CD8-positive, alpha-beta T cell (primary cell): ENCODE measurements at regions of chr12 and their contacts with region 1.

Region 1: DNA sequence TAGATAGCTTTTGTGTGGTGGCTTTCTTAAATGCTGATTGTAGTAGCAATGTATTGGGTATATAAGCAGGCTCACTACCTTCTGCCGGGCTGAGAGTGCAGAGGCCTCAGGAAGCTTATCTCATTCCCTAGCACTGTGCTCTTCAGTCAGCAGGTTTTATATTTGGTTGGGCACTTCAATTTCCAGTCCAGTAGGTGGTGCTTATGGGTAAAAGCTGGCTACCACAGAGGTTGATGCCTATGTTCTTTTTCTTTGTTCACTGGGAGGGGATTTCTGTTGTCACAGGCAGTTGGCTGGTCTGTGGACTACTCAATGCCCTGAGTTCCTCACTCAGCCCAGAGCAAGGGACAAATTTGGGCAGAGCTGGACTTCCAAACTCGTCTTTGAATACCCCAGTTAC is 43.0 kb upstream of the GLIPR1 start:
- DNase-seq: peak in 2 of 9 experiments; percentile 67 to 72
- ATAC-seq: peak; percentile 78
- H3K4me3 ChIP-seq: no peak overlapping the region
- H3K4me3 Mint-ChIP-seq: no peak overlapping the region
- H3K27ac ChIP-seq: no peak overlapping the region
- H3K27ac Mint-ChIP-seq: no peak overlapping the region
- H3K4me1 ChIP-seq: no peaks in the 10 kb centered on the region
- H3K4me1 Mint-ChIP-seq: no peaks in the 10 kb centered on the region
- H3K27me3 ChIP-seq: no peaks in the 10 kb centered on the region
- H3K27me3 Mint-ChIP-seq: peaks cover 9% of the 10 kb centered on the region
- CTCF ChIP-seq: peak; percentile 32

Region 2: DNA sequence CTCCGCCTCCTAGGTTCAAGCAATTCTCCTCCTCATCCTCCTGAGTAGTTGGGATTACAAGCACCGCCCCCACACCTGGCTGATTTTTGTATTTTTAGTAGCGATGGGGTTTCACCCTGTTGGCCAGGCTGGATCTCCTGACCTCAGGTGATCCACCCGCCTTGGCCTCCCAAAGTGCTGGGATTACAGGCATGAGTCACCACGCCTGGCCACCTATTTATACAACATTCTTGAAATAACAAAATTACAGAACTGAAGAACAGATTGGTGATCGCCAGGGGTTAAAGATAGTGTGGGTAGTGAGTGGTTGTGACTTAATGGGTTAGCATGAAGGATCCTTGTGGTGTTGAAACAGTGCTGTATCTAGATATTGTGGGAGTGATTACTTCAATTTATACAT is 95.7 kb before region 1 on chr12:
- CTCF ChIA-PET with region 1: no interaction called
- POLR2A ChIA-PET with region 1: no interaction called
- intact Hi-C with region 1: no loop called
- DNase-seq: no peak
- ATAC-seq: no peak
- H3K4me3 ChIP-seq: no peak overlapping the region
- H3K4me3 Mint-ChIP-seq: no peak overlapping the region
- H3K27ac ChIP-seq: no peak overlapping the region
- H3K27ac Mint-ChIP-seq: no peak overlapping the region
- H3K4me1 ChIP-seq: no peaks in the 10 kb centered on the region
- H3K4me1 Mint-ChIP-seq: no peaks in the 10 kb centered on the region
- H3K27me3 ChIP-seq: no peaks in the 10 kb centered on the region
- H3K27me3 Mint-ChIP-seq: no peaks in the 10 kb centered on the region
- CTCF ChIP-seq: no peak

Region 3: DNA sequence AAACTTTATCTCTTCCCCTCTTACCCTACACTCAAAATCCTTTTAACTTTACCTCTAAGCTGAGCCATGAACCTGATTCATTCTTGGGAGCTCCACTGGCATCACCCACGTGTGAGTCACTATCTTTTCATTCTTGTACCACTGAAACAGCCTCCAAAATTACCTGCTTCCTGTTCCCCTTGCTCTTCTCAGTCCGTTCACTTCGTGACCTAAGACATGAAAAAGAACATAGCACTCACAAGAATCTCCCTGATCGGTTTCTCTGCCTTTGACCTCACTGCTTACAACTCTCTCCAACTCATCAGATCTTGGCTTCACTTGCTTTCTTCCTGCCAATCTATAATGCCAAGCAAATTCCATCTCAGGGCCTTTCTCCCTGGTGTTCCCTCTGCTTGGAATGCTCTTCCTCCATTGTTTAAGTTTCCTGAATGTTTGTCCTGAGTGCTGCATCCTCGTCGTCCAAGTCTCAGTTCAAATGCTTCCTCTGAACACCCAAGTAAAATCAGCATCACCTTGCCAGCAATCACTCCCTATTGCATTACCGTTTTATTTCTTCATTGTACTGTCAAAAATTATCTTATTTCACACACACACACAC is 52.1 kb after region 1 on chr12:
- CTCF ChIA-PET with region 1: interaction called, 38 read pairs
- POLR2A ChIA-PET with region 1: interaction called, 5 read pairs
- intact Hi-C with region 1: loop called in 1 of 2 experiments (anchors 5 kb)
- DNase-seq: peak in 1 of 9 experiments; percentile 23
- ATAC-seq: peak; percentile 43
- H3K4me3 ChIP-seq: no peak overlapping the region
- H3K4me3 Mint-ChIP-seq: no peak overlapping the region
- H3K27ac ChIP-seq: peak overlapping the region in 1 of 2 experiments; percentile 27
- H3K27ac Mint-ChIP-seq: peak overlapping the region; percentile 68
- H3K4me1 ChIP-seq: no peaks in the 10 kb centered on the region
- H3K4me1 Mint-ChIP-seq: peaks cover 47% of the 10 kb centered on the region
- H3K27me3 ChIP-seq: no peaks in the 10 kb centered on the region
- H3K27me3 Mint-ChIP-seq: no peaks in the 10 kb centered on the region
- CTCF ChIP-seq: no peak

Region 4: GRCh38 chr12:75505706-75506312 is 68.2 kb after region 1 on chr12:
- CTCF ChIA-PET with region 1: interaction called, 10 read pairs
- POLR2A ChIA-PET with region 1: no interaction called
- intact Hi-C with region 1: loop called (anchors 1 to 2 kb)
- DNase-seq: peak in 2 of 9 experiments; percentile 41 to 55
- ATAC-seq: peak; percentile 63
- H3K4me3 ChIP-seq: no peak overlapping the region
- H3K4me3 Mint-ChIP-seq: no peak overlapping the region
- H3K27ac ChIP-seq: no peak overlapping the region
- H3K27ac Mint-ChIP-seq: no peak overlapping the region
- H3K4me1 ChIP-seq: peaks cover 13% of the 10 kb centered on the region
- H3K4me1 Mint-ChIP-seq: peaks cover 26% of the 10 kb centered on the region
- H3K27me3 ChIP-seq: no peaks in the 10 kb centered on the region
- H3K27me3 Mint-ChIP-seq: no peaks in the 10 kb centered on the region
- CTCF ChIP-seq: peak; percentile 84